GM12878 (cell line): ENCODE measurements at regions of chr12 and their contacts with region 1.

Region 1: DNA sequence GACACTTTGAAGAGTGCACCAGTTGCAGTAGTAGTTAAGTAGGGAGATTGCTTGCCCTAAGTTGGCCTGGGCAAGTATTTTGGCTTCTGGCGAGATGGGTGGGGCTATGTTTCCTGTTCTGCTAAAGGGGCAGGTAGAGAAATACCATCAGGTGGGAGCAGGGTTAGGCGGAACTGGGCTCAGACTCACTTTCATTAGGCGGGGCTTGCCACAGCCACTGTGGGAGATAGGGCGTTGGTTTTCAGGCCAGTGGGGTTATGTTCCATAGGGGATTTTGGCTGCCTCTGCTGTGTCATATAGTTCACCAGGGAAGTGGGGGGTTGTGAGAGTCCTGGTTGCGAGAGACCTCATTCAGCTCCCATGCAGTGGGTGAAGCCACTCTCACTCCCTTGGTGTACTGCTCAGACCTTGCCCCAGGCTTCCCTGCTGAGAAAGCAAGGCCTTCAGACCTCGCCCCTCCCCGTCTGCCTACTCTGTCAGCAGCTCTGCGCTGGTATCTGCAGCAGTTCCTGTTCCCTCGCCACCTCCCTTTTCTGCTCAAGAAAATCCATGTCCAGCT is 43.3 kb downstream of the AEBP2 start:
- DNase-seq: peak; percentile 84
- ATAC-seq: peak; percentile 95
- H3K4me3 ChIP-seq: no peak overlapping the region
- H3K27ac ChIP-seq: peak overlapping the region; percentile 70
- H3K4me1 ChIP-seq: peaks cover 19% of the 10 kb centered on the region
- H3K27me3 ChIP-seq: no peaks in the 10 kb centered on the region
- CTCF ChIP-seq: no peak
- EP300 ChIP-seq: no peak
- POLR2A ChIP-seq: peak; percentile 53
- RAD21 ChIP-seq: no peak

Region 2: DNA sequence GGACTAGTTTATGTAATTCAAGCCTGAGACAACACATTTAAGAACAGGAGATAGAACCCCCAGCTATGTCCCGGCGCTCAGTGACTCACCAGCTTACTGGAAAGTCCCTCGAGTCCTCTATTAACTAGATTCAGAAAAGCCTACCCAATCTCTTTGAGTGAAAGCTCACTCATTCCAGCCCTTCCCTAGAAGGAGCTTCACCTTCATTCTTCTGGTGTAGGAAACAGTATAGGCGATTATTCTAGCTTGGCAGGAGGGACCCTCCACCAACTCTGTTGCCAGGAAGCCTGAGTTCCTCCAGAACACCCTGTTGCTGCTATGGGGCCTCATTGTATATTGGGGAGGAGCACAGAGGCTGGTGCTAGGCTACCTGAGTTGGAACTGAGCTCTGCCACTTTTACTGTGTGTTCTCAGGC is 100.5 kb before region 1 on chr12:
- CTCF ChIA-PET with region 1: no interaction called
- POLR2A ChIA-PET with region 1: no interaction called
- RAD21 ChIA-PET with region 1: no interaction called
- SMC1A ChIA-PET with region 1: no interaction called
- in situ Hi-C with region 1: no loop called
- intact Hi-C with region 1: loop called (anchors 10 kb)
- DNase-seq: peak; percentile 46
- ATAC-seq: peak; percentile 96
- H3K4me3 ChIP-seq: no peak overlapping the region
- H3K27ac ChIP-seq: peak overlapping the region; percentile 61; the same call in 1 of the 2 replicates
- H3K4me1 ChIP-seq: peaks cover 3% of the 10 kb centered on the region; the same call in 1 of the 2 replicates
- H3K27me3 ChIP-seq: no peaks in the 10 kb centered on the region
- CTCF ChIP-seq: no peak
- EP300 ChIP-seq: no peak
- POLR2A ChIP-seq: no peak
- RAD21 ChIP-seq: no peak

Region 3: DNA sequence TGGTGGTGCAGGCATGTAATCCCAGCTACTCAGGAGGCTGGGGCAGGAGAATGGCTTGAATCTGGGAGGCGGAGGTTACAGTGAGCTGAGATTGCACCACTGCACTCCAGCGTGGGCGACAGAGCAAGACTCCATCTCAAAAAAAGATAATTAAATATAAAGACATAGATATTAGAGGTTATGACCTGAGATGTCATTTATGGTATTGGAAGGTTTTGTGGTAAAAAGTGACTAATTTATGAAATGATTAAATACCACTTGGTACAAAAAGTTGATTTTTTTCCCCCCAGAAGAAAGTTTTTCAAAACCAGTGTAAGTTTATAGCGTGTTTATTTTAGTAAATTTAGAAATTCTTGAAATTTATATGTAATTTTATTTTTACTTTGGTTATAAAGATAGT is 39.0 kb before region 1 on chr12:
- CTCF ChIA-PET with region 1: no interaction called
- POLR2A ChIA-PET with region 1: no interaction called
- RAD21 ChIA-PET with region 1: no interaction called
- SMC1A ChIA-PET with region 1: interaction called, 3 read pairs
- in situ Hi-C with region 1: no loop called
- intact Hi-C with region 1: loop called (anchors 2 kb)
- DNase-seq: no peak
- ATAC-seq: no peak
- H3K4me3 ChIP-seq: 0 out of 2 replicates have a peak overlapping the region, but pooled peaks have one; percentile 85
- H3K27ac ChIP-seq: no peak overlapping the region
- H3K4me1 ChIP-seq: no peaks in the 10 kb centered on the region
- H3K27me3 ChIP-seq: no peaks in the 10 kb centered on the region
- CTCF ChIP-seq: no peak
- EP300 ChIP-seq: no peak
- POLR2A ChIP-seq: no peak
- RAD21 ChIP-seq: no peak

Region 4: DNA sequence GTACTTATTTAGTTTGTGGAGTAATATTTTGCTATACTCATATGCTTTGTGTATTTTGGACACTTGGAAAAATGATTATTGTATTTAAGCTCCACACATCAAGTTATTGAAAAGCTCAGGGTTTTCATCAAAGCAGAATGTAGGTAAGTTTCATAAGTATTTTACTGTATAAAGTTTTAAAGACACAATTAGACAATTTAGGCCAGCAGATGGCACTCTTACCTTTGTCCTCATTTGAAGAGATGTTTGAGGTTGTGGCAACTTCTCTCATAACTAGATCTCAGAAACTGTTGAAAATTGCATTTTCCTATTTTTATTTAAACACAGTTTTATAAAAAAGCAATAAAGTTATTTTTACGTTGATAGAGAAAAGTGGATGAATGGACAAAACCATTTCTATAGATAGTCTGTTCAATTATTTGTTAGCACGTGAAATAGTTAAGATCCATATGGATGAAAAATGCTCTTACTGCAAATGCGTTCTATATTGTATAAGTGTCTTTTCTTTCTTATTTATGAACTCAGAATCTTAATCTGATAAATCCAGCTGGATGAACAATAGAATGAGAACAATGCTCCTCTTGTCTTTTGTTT is 256.6 kb after region 1 on chr12:
- CTCF ChIA-PET with region 1: no interaction called
- POLR2A ChIA-PET with region 1: no interaction called
- RAD21 ChIA-PET with region 1: no interaction called
- SMC1A ChIA-PET with region 1: no interaction called
- in situ Hi-C with region 1: no loop called
- intact Hi-C with region 1: no loop called
- DNase-seq: peak; percentile 16
- ATAC-seq: peak; percentile 70
- H3K4me3 ChIP-seq: no peak overlapping the region
- H3K27ac ChIP-seq: no peak overlapping the region
- H3K4me1 ChIP-seq: no peaks in the 10 kb centered on the region
- H3K27me3 ChIP-seq: no peaks in the 10 kb centered on the region
- CTCF ChIP-seq: peak; percentile 47 to 62 (median 53)
- EP300 ChIP-seq: no peak
- POLR2A ChIP-seq: no peak
- RAD21 ChIP-seq: peak; percentile 75